A549 (cell line): ENCODE measurements at regions of chr17 and their contacts with region 1.

Region 1: DNA sequence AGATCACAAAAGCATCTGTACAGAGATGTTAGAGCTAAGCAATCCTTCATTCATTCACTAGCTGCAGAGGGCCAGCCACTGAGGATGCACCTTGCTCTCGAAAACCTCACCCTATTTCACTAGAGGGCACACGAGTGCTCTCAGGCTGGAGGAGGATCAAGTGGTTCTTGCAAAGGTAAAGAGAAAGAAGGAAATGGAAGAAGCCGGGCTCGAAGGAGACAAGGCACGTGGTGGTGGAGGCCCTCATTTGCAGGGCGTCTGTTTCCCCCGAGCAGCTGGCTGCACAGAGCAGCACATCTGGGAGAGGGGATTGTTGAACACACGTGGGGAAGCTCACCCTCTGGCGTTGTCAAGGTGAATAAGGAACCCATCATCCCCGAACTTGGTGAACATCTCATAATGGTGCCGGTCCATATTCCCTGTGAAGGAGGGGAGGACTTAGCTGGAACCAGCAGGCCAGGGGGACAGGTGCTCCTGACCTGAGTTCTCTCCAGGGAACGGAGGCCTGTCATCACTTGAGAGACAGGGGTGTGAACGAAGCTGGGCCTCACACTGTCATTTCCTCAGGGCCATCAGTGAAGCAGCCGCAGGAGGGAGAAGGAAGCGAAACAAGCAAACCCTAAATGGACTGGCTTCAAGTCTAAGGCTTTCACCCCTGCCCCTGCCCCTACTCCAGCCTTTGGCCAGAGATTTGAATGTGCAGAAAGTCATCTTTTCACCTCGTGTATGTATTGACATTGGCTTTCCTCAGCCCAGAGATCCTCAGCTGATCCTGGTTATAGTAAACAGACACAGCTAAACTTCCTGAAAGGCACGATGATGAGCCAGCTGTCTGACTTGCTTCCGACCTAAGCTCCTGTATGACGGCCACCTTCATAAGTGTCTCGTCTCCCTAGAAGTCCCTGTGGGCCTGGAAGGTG is 27.6 kb downstream of the PRKAR1A start:
- DNase-seq: peak in 1 of 2 experiments; percentile 22
- ATAC-seq: peak in 1 of 2 experiments; percentile 18; a peak in 2 of 6 replicates
- H3K4me3 ChIP-seq: no peak overlapping the region
- H3K27ac ChIP-seq: no peak overlapping the region
- H3K4me1 ChIP-seq: peaks cover 13% of the 10 kb centered on the region; the same call in 2 of the 3 replicates
- CTCF ChIP-seq: no peak
- EP300 ChIP-seq: no peak
- POLR2A ChIP-seq: no peak
- RAD21 ChIP-seq: no peak

Region 2: GRCh38 chr17:68527323-68527722 is 12.5 kb before region 1 on chr17:
- CTCF ChIA-PET with region 1: interaction called, 12 read pairs
- POLR2A ChIA-PET with region 1: no interaction called
- DNase-seq: no peak
- ATAC-seq: no peak
- H3K4me3 ChIP-seq: no peak overlapping the region
- H3K27ac ChIP-seq: no peak overlapping the region
- H3K4me1 ChIP-seq: no peaks in the 10 kb centered on the region
- CTCF ChIP-seq: no peak
- EP300 ChIP-seq: no peak
- POLR2A ChIP-seq: no peak
- RAD21 ChIP-seq: no peak